Adrenal gland (tissue), 19 donors: ENCODE measurements at regions of chrX and their contacts with region 1.

Region 1: DNA sequence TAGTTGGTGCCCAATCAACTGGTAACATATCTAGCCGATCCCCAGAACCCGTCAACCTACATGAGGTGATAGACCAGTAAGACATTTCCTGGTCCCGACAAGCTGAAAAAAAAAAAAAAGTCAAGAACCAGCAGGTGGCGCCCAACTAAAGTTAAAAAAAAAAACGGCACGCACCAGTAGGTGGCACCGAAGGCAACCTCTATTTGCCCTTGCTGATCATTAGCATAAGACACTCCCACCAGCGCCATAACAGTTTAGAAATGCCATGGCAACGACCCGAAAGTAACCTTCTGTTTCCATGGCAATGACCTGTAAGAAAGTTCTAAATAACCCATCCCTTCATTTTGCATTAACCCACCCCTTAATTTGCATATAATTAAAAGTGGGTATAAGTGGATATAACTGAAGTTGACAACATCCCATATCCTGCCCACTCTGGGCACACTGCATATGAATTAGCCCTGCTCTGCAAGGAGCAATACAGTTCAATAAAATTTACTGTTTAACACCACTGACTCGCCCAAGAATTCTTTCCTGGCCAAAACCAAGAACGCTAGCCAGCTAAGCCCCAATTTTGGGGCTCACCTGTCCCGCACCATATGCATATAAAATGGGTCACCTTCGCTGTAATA is 83.9 kb upstream of the SPANXB1 start:
- DNase-seq: peak in 6 of 7 donors; percentile 20 to 67 (median 33)
- H3K4me3 ChIP-seq: no peak overlapping the region
- H3K27ac ChIP-seq: no peak overlapping the region
- H3K4me1 ChIP-seq: no peaks in the 10 kb centered on the region
- H3K27me3 ChIP-seq: no peaks in the 10 kb centered on the region
- CTCF ChIP-seq: peak; percentile 30 to 65 (median 50)
- POLR2A ChIP-seq: no peak

Region 2: GRCh38 chrX:141278302-141278701 is 359.8 kb after region 1 on chrX:
- intact Hi-C with region 1: loop called in 1 of 2 experiments (anchors 5 kb)
- DNase-seq: peak in 4 of 7 donors; percentile 8 to 25 (median 18)
- H3K4me3 ChIP-seq: no peak overlapping the region
- H3K27ac ChIP-seq: no peak overlapping the region
- H3K4me1 ChIP-seq: no peaks in the 10 kb centered on the region
- H3K27me3 ChIP-seq: no peaks in the 10 kb centered on the region
- CTCF ChIP-seq: peak; percentile 37 to 62 (median 43)
- POLR2A ChIP-seq: no peak

Region 3: GRCh38 chrX:141405842-141406492 is 487.4 kb after region 1 on chrX:
- intact Hi-C with region 1: no loop called
- DNase-seq: no peak
- H3K4me3 ChIP-seq: no peak overlapping the region
- H3K27ac ChIP-seq: no peak overlapping the region
- H3K4me1 ChIP-seq: no peaks in the 10 kb centered on the region
- H3K27me3 ChIP-seq: no peaks in the 10 kb centered on the region
- CTCF ChIP-seq: no peak
- POLR2A ChIP-seq: no peak